A549 (cell line): ENCODE measurements at regions of chr1 and their contacts with region 1.

Region 1: DNA sequence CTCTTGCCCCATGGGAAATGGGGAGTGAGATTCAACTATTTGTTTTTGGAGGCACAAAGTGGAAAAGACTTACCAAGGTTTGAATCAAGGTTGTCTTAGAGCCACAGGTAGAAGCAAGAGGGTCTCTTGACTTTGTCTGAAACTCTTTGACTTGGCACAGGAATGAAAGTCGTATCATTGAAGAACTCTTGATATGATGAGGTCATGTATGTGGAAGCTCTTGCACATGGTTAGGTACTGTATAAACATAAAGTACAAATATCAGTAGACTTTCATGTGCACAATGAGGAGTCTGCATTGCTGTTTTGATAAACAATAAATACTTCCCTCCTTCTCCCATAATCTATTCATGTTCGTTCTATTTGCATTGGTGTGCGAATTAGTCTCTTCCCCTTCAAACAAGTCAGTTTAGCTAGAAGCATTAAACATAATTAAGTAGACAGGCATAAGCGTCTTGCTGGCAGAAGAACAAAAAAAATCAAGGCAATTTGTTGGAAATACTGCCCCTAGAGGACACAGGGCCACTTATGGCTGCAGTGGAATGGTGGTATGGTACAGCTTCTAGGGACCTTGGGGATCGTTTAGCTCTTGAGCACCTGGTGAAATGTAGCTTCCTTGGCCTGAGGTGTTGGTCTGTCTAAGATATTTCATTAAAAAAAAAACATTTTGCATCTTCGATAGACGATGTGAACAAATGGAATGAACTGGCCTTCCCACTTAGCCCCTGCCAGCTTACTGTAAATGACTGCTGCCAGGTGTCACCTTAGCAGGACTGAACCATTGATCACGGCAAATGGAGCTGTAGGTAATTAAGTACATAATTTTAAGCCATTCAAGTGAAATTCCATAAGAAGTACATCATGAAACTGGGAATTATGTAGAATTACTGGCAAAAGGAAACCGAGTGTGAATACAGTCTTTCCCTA is 218.0 kb upstream of the GALNT2 start:
- DNase-seq: peak; percentile 47 to 48
- ATAC-seq: peak; percentile 56 to 88; a peak in 4 of 6 replicates
- H3K4me3 ChIP-seq: no peak overlapping the region
- H3K27ac ChIP-seq: no peak overlapping the region
- H3K4me1 ChIP-seq: peaks cover 6% of the 10 kb centered on the region; the same call in 1 of the 3 replicates
- CTCF ChIP-seq: peak; percentile 61
- EP300 ChIP-seq: no peak
- POLR2A ChIP-seq: no peak
- RAD21 ChIP-seq: peak; percentile 36 to 55; a peak in 3 of 5 replicates

Region 2: DNA sequence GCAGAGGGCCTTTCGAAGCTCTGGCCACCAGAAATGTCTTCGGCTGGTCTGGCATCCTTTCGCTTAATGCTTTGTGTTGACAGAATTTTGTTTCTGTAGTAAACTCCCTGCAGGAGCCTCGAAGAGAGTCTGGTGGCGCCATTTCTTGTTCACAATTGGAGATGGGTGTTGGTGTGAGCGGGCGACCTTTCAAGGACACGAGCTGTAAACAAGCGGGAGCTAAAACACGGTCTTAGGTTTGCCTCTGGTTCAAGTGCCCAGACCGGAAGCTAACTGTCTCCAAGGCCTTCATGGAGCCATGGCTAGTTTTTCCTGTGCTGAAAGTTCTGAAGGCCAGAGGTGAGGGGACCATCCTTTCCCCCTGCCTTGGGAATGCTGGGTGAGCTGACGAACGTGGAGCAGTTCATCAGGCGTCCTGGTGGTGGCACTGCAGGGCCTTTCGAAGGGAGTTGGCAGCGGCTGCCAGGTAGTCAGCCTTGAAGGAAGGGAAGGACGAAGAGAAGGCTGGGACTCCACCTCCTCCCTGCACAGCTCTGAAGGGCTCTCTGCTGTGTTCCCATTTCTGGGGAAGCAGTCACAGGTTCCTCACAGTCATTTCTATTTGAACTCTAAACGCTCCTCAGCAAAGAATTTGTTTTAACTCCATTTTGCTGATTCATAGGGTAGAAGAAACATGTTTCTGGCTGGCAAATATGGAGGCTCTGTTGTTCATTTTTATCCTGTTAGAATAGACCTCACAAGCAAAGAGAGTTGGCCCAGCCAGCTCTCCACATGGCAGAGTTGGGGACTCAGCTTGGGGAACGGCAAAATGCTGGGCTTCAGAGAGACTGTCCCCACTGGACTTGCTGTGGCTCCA is 187.8 kb before region 1 on chr1:
- CTCF ChIA-PET with region 1: no interaction called
- POLR2A ChIA-PET with region 1: no interaction called
- DNase-seq: peak; percentile 70 to 86
- ATAC-seq: peak; percentile 84 to 96
- H3K4me3 ChIP-seq: no peak overlapping the region
- H3K27ac ChIP-seq: peak overlapping the region; percentile 59 to 67; a peak in 5 of 6 replicates
- H3K4me1 ChIP-seq: peaks cover 4% of the 10 kb centered on the region; the same call in 1 of the 3 replicates
- CTCF ChIP-seq: peak; percentile 71
- EP300 ChIP-seq: no peak
- POLR2A ChIP-seq: no peak
- RAD21 ChIP-seq: peak; percentile 82 to 87

Region 3: GRCh38 chr1:229862017-229862774 is 13.2 kb after region 1 on chr1:
- CTCF ChIA-PET with region 1: interaction called, 28 read pairs
- POLR2A ChIA-PET with region 1: no interaction called
- DNase-seq: no peak
- ATAC-seq: no peak
- H3K4me3 ChIP-seq: no peak overlapping the region
- H3K27ac ChIP-seq: no peak overlapping the region
- H3K4me1 ChIP-seq: no peaks in the 10 kb centered on the region
- CTCF ChIP-seq: no peak
- EP300 ChIP-seq: no peak
- POLR2A ChIP-seq: no peak
- RAD21 ChIP-seq: no peak

Region 4: GRCh38 chr1:229947968-229948367 is 99.0 kb after region 1 on chr1:
- CTCF ChIA-PET with region 1: no interaction called
- POLR2A ChIA-PET with region 1: no interaction called
- DNase-seq: no peak
- ATAC-seq: peak in 1 of 2 experiments; percentile 33; a peak in 3 of 6 replicates
- H3K4me3 ChIP-seq: no peak overlapping the region
- H3K27ac ChIP-seq: no peak overlapping the region
- H3K4me1 ChIP-seq: no peaks in the 10 kb centered on the region
- CTCF ChIP-seq: no peak
- EP300 ChIP-seq: no peak
- POLR2A ChIP-seq: no peak
- RAD21 ChIP-seq: no peak